Natural killer cell (primary cell): ENCODE measurements at regions of chr19 and their contacts with region 1.

Region 1: DNA sequence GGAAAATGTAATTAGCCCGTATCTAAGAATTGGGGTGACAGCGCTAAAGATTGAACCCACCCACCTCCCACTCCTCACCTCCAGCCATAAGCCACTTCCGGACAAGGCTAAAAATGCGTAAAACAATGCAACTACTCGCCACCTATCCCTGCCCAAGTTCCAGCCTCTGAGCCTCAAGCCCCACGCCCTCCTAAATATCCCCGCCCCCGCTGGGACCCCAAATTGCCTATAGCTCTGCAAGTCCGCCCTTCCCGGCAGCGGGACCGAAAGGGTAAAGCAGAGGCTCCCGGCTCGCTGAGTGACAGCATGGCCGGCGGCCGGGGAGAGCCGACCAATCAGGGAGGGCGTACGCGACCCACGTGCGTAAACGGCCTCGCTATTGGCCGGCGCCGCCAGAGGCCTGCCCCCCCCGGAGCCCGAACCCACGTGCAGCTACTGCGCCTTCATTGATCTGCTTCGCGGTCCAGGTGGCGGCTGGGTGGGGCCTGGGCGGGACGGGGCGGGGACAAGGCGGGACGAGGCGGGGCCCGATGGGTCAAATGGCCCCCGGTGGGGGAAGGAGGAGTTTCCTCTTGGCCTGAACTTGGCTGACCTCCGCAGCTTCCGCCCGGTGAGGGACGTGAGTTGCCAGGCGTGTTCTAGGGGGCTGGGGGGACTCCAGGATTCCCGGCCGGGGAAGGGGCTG is at the start of gene TLE6:
- DNase-seq: peak; percentile 90 to 96
- ATAC-seq: peak; percentile 97 to 99 (median 98)
- H3K4me3 ChIP-seq: peak within 1 kb of the TSS; percentile 71
- H3K4me3 Mint-ChIP-seq: peak within 1 kb of the TSS; percentile 88
- H3K27ac ChIP-seq: no peak within 1 kb of the TSS
- H3K27ac Mint-ChIP-seq: peak within 1 kb of the TSS; percentile 45 to 89
- H3K4me1 ChIP-seq: peaks cover 23% of the 10 kb centered on the region
- H3K4me1 Mint-ChIP-seq: peaks cover 10 to 24% of the 10 kb centered on the region in 2 donors
- H3K27me3 ChIP-seq: no peaks in the 10 kb centered on the region
- H3K27me3 Mint-ChIP-seq: peaks cover 8 to 11% of the 10 kb centered on the region in 2 donors
- CTCF ChIP-seq: no peak
- total RNA-seq, gene TLE6: 0.49 to 2.2 TPM in 2 of 3 donors, not detected in the other

Region 2: GRCh38 chr19:2933490-2933910 is 43.6 kb before region 1 on chr19:
- intact Hi-C with region 1: no loop called
- DNase-seq: no peak
- ATAC-seq: no peak
- H3K4me3 ChIP-seq: no peak overlapping the region
- H3K4me3 Mint-ChIP-seq: no peak overlapping the region
- H3K27ac ChIP-seq: no peak overlapping the region
- H3K27ac Mint-ChIP-seq: no peak overlapping the region
- H3K4me1 ChIP-seq: no peaks in the 10 kb centered on the region
- H3K4me1 Mint-ChIP-seq: no peaks in the 10 kb centered on the region
- H3K27me3 ChIP-seq: no peaks in the 10 kb centered on the region
- H3K27me3 Mint-ChIP-seq: no peaks in the 10 kb centered on the region
- CTCF ChIP-seq: no peak

Region 3: DNA sequence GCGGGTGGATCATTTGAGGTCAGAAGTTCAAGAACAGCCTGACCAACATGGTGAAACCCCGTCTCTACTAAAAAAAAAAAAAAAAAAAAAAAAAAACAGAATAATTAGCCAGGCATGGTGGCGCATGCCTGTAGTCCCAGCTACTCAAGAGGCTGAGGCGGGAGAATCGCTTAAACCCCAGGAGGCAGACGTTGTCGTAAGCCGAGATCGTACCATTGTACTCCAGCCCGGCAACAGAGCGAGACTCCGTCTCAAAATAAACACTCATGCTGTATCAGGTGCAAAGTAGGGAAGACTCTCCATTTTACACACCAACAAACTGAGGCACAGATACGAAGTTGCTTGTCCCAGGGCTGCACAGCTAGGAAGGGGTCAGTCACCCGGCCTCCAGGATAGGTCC is 15.8 kb after region 1 on chr19:
- intact Hi-C with region 1: no loop called
- DNase-seq: no peak
- ATAC-seq: no peak
- H3K4me3 ChIP-seq: no peak overlapping the region
- H3K4me3 Mint-ChIP-seq: no peak overlapping the region
- H3K27ac ChIP-seq: no peak overlapping the region
- H3K27ac Mint-ChIP-seq: no peak overlapping the region
- H3K4me1 ChIP-seq: no peaks in the 10 kb centered on the region
- H3K4me1 Mint-ChIP-seq: no peaks in the 10 kb centered on the region
- H3K27me3 ChIP-seq: no peaks in the 10 kb centered on the region
- H3K27me3 Mint-ChIP-seq: no peaks in the 10 kb centered on the region
- CTCF ChIP-seq: no peak

Region 4: DNA sequence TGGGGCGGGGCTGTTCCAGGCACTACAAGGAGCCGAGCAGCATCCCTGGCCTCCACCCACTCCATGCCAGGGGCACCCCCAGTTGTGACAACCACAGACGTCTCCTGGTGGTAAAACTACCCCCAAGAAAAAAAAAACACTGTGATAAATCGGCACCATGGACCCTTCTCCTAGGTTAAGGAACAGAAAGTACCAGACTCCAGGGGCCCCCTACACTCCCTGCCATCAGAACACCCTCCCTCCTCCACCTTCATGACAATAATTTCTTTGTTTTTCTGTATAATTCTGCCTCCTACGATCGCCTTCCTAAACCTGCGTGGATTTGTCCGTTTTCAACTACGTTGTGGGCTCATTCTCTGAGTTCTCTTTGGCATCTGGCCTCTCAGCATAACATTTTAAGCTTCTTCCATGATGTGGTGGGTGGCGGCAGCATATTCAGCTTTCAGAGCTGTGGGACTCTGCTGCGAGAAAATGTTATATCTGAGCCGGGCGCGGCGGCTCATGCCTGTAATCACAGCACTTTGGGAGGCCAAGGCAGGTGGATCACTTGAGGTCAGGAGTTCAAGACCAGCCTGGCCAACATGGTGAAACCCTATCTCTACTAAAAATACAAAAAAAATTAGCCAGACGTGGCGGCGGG is 43.3 kb after region 1 on chr19:
- intact Hi-C with region 1: no loop called
- DNase-seq: no peak
- ATAC-seq: no peak
- H3K4me3 ChIP-seq: no peak overlapping the region
- H3K4me3 Mint-ChIP-seq: no peak overlapping the region
- H3K27ac ChIP-seq: no peak overlapping the region
- H3K27ac Mint-ChIP-seq: no peak overlapping the region
- H3K4me1 ChIP-seq: peaks cover 9% of the 10 kb centered on the region
- H3K4me1 Mint-ChIP-seq: no peaks in the 10 kb centered on the region
- H3K27me3 ChIP-seq: peaks cover 3% of the 10 kb centered on the region
- H3K27me3 Mint-ChIP-seq: peaks cover 0 to 4% of the 10 kb centered on the region in 2 donors
- CTCF ChIP-seq: no peak

Region 5: DNA sequence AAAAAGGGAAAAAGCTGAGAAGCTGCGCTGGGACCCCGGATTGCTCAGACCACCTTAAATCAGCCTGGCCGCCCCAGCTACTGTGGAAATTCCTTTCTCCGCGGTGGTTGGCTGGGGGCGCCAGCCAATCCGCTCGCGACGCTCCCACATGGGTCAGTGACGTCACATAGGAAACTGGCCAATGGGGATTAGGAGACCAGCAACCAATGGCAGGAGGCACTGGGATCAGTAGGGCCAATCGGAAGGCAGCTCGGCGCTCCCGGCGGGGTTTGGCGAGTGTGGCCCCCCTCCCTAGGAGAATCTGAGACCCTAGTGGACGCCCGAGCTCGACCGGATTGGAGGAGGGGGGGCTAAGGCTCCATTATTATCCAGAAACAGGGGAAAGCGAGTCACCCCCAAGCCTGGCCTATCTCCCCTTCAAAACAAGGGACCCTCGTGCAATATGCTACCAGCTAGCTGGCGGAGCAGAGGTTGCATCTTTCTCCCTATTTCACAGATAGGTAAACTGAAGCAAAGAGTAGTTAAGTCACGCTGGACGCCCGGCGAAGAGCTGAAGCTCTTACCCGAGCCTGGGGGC is 58.5 kb after region 1 on chr19:
- intact Hi-C with region 1: loop called (anchors 10 kb)
- DNase-seq: peak; percentile 90 to 99
- ATAC-seq: peak; percentile 87 to 96 (median 92)
- H3K4me3 ChIP-seq: peak overlapping the region; percentile 49
- H3K4me3 Mint-ChIP-seq: peak overlapping the region; percentile 95
- H3K27ac ChIP-seq: peak overlapping the region; percentile 75
- H3K27ac Mint-ChIP-seq: peak overlapping the region; percentile 95
- H3K4me1 ChIP-seq: peaks cover 22% of the 10 kb centered on the region
- H3K4me1 Mint-ChIP-seq: peaks cover 18 to 31% of the 10 kb centered on the region in 2 donors
- H3K27me3 ChIP-seq: no peaks in the 10 kb centered on the region
- H3K27me3 Mint-ChIP-seq: peaks cover 0 to 10% of the 10 kb centered on the region in 2 donors
- CTCF ChIP-seq: no peak